Naive thymus-derived CD4-positive, alpha-beta T cell (primary cell): ENCODE measurements at regions of chr4 and their contacts with region 1.

Region 1: DNA sequence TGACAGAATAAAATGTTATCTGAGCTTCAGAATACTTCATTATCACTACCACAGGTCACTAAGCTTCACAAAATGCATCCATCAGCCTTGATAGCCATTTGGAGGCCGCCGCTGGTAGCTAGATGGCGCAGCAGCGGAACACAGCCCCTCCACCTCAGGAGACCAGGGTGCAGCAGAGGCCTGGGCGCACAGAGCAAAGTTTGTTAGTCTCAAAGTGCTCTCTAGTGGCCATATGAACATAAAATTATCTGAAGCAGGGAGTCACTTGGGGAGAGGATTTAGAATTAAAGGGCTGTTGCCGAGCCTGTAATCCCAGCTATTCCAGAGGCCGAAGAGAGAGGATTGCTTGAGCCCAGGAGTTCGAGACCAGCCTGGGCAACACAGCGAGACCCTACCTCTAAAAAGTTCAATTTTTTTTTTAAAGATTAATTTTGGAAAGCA is 8.1 kb upstream of the DCTD start:
- DNase-seq: peak; percentile 33 to 67 (median 52)
- ATAC-seq: peak; percentile 96
- H3K4me3 ChIP-seq: no peak overlapping the region
- H3K4me3 Mint-ChIP-seq: no peak overlapping the region
- H3K27ac ChIP-seq: no peak overlapping the region
- H3K27ac Mint-ChIP-seq: no peak overlapping the region
- H3K4me1 ChIP-seq: no peaks in the 10 kb centered on the region
- H3K4me1 Mint-ChIP-seq: peaks cover 0 to 8% (median 0%) of the 10 kb centered on the region in 7 donors
- H3K27me3 ChIP-seq: no peaks in the 10 kb centered on the region
- H3K27me3 Mint-ChIP-seq: peaks cover 0 to 36% (median 0%) of the 10 kb centered on the region in 5 donors

Region 2: GRCh38 chr4:181143250-181143854 is 1782.0 kb before region 1 on chr4:
- CTCF ChIA-PET with region 1: no interaction called
- POLR2A ChIA-PET with region 1: no interaction called
- intact Hi-C with region 1: loop called in 1 of 2 experiments (anchors 1 kb)
- DNase-seq: peak; percentile 7 to 57 (median 41)
- ATAC-seq: peak; percentile 49
- H3K4me3 ChIP-seq: no peak overlapping the region
- H3K4me3 Mint-ChIP-seq: no peak overlapping the region
- H3K27ac ChIP-seq: no peak overlapping the region
- H3K27ac Mint-ChIP-seq: no peak overlapping the region
- H3K4me1 ChIP-seq: no peaks in the 10 kb centered on the region
- H3K4me1 Mint-ChIP-seq: no peaks in the 10 kb centered on the region
- H3K27me3 ChIP-seq: no peaks in the 10 kb centered on the region
- H3K27me3 Mint-ChIP-seq: peaks cover 0 to 8% (median 0%) of the 10 kb centered on the region in 5 donors

Region 3: DNA sequence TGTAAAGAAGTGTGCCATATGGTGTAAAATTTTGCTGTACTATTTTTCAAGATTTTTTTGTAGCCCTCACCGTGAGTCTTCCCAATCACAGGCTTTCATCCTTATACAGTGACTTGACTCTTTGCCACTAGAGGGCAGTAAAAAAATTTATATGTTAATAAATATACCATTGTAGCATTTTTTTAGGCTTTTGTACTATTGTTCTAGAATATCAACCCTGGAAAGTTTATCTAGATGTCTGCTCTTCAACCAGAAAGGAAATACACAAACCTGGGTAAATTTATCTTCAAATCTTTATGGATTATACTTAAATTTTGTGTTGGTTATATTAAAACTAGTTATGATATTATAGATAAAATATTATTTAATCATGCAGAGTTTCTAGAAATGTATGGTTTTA is 446.8 kb before region 1 on chr4:
- CTCF ChIA-PET with region 1: interaction called, 6 read pairs
- POLR2A ChIA-PET with region 1: no interaction called
- intact Hi-C with region 1: loop called (anchors 1 kb)
- DNase-seq: peak in 6 of 9 donors; percentile 1 to 36 (median 22)
- ATAC-seq: peak; percentile 61
- H3K4me3 ChIP-seq: no peak overlapping the region
- H3K4me3 Mint-ChIP-seq: no peak overlapping the region
- H3K27ac ChIP-seq: no peak overlapping the region
- H3K27ac Mint-ChIP-seq: no peak overlapping the region
- H3K4me1 ChIP-seq: no peaks in the 10 kb centered on the region
- H3K4me1 Mint-ChIP-seq: no peaks in the 10 kb centered on the region
- H3K27me3 ChIP-seq: no peaks in the 10 kb centered on the region
- H3K27me3 Mint-ChIP-seq: peaks cover 0 to 16% (median 8%) of the 10 kb centered on the region in 5 donors

Region 4: GRCh38 chr4:182679533-182679932 is 245.8 kb before region 1 on chr4:
- CTCF ChIA-PET with region 1: no interaction called
- POLR2A ChIA-PET with region 1: no interaction called
- intact Hi-C with region 1: loop called in 1 of 2 experiments (anchors 10 kb)
- DNase-seq: no peak
- ATAC-seq: no peak
- H3K4me3 ChIP-seq: no peak overlapping the region
- H3K4me3 Mint-ChIP-seq: no peak overlapping the region
- H3K27ac ChIP-seq: no peak overlapping the region
- H3K27ac Mint-ChIP-seq: no peak overlapping the region
- H3K4me1 ChIP-seq: no peaks in the 10 kb centered on the region
- H3K4me1 Mint-ChIP-seq: no peaks in the 10 kb centered on the region
- H3K27me3 ChIP-seq: no peaks in the 10 kb centered on the region
- H3K27me3 Mint-ChIP-seq: peaks cover 8 to 21% (median 9%) of the 10 kb centered on the region in 5 donors

Region 5: DNA sequence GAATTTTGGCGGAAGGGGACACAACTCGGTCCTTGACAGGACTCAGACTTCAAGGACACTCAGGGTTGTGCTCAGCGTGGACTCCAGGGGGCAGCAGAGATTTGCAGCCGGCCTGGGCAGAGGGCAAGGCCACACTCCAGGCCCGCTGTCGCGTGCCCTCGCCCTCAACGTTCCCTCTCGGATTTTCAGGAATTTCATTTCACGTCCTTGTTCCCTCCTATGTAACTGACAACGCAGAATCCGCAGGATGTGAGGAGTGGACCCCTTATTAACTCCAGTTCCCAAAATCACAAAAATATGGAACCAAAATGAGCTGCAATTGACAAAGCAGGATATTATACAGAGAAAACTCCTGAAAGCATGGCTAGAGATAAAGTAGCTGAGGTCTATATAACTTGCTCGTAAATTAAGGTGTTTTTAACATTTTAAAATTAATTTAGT is 12.9 kb after region 1 on chr4:
- CTCF ChIA-PET with region 1: interaction called, 11 read pairs
- POLR2A ChIA-PET with region 1: no interaction called
- intact Hi-C with region 1: no loop called
- DNase-seq: peak; percentile 26 to 76 (median 48)
- ATAC-seq: peak; percentile 96
- H3K4me3 ChIP-seq: no peak overlapping the region
- H3K4me3 Mint-ChIP-seq: peak overlapping the region in 1 of 10 donors; percentile 21
- H3K27ac ChIP-seq: no peak overlapping the region
- H3K27ac Mint-ChIP-seq: no peak overlapping the region
- H3K4me1 ChIP-seq: no peaks in the 10 kb centered on the region
- H3K4me1 Mint-ChIP-seq: peaks cover 0 to 4% (median 0%) of the 10 kb centered on the region in 7 donors
- H3K27me3 ChIP-seq: no peaks in the 10 kb centered on the region
- H3K27me3 Mint-ChIP-seq: peaks cover 12 to 27% (median 15%) of the 10 kb centered on the region in 5 donors